PC-9 (cell line): ENCODE measurements at regions of chr17 and their contacts with region 1.

Region 1: DNA sequence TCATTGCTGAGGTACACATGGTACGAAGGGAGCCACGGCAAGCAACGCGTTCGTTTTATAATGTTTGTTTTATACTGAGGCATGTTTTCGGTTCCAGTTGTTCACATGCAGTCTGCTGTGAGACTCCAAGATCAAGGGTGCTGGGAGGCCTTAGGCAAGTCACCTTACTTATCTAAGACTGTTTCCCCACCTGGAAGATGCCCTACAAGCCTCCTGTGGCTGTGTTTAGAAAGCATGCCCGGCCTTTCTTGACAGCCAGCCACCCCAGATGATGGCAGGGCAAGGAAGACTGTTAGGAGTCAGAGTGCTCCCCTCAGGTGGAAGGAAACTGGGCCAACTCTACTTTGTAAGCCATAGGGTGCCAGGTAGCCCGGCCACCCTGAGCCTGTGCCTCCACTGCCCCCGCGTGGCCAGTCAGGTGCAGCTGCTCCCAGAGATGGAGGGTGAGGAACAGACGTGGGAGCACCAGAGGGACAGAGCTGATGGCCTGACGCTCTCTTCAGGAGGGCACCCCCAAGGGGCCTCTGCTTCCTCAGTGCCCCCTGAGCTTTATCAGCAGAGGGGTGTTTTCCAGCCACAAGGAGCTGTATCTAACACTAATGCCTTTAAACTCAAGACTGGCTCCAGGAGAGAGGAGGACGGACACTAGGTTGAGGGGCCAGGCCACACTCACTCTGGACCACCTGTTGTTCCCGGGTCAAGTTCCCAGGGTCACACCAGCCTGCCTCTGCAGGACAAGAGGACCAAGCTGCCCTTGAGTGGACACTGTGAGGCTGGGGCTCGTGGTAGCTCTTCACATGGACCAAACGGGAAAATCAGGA is 5.4 kb downstream of the NAT9 start:
- DNase-seq: peak; percentile 66 to 79
- H3K4me3 ChIP-seq: no peak overlapping the region
- H3K27ac ChIP-seq: no peak overlapping the region
- H3K4me1 ChIP-seq: peaks cover 19% of the 10 kb centered on the region
- H3K27me3 ChIP-seq: no peaks in the 10 kb centered on the region
- CTCF ChIP-seq: peak; percentile 88

Region 2: GRCh38 chr17:74566132-74566753 is 204.5 kb before region 1 on chr17:
- CTCF ChIA-PET with region 1: no interaction called
- POLR2A ChIA-PET with region 1: no interaction called
- intact Hi-C with region 1: loop called (anchors 2 kb)
- DNase-seq: peak in 1 of 2 experiments; percentile 22
- H3K4me3 ChIP-seq: no peak overlapping the region
- H3K27ac ChIP-seq: no peak overlapping the region
- H3K4me1 ChIP-seq: no peaks in the 10 kb centered on the region
- H3K27me3 ChIP-seq: peaks cover 81% of the 10 kb centered on the region
- CTCF ChIP-seq: peak; percentile 66

Region 3: GRCh38 chr17:74659898-74660297 is 110.8 kb before region 1 on chr17:
- CTCF ChIA-PET with region 1: interaction called, 6 read pairs
- POLR2A ChIA-PET with region 1: no interaction called
- intact Hi-C with region 1: loop called (anchors 1 kb)
- DNase-seq: no peak
- H3K4me3 ChIP-seq: no peak overlapping the region
- H3K27ac ChIP-seq: no peak overlapping the region
- H3K4me1 ChIP-seq: no peaks in the 10 kb centered on the region
- H3K27me3 ChIP-seq: peaks cover 84% of the 10 kb centered on the region
- CTCF ChIP-seq: no peak

Region 4: GRCh38 chr17:74722782-74723181 is 47.9 kb before region 1 on chr17:
- CTCF ChIA-PET with region 1: no interaction called
- POLR2A ChIA-PET with region 1: no interaction called
- intact Hi-C with region 1: no loop called
- DNase-seq: no peak
- H3K4me3 ChIP-seq: no peak overlapping the region
- H3K27ac ChIP-seq: no peak overlapping the region
- H3K4me1 ChIP-seq: no peaks in the 10 kb centered on the region
- H3K27me3 ChIP-seq: peaks cover 65% of the 10 kb centered on the region
- CTCF ChIP-seq: no peak

Region 5: DNA sequence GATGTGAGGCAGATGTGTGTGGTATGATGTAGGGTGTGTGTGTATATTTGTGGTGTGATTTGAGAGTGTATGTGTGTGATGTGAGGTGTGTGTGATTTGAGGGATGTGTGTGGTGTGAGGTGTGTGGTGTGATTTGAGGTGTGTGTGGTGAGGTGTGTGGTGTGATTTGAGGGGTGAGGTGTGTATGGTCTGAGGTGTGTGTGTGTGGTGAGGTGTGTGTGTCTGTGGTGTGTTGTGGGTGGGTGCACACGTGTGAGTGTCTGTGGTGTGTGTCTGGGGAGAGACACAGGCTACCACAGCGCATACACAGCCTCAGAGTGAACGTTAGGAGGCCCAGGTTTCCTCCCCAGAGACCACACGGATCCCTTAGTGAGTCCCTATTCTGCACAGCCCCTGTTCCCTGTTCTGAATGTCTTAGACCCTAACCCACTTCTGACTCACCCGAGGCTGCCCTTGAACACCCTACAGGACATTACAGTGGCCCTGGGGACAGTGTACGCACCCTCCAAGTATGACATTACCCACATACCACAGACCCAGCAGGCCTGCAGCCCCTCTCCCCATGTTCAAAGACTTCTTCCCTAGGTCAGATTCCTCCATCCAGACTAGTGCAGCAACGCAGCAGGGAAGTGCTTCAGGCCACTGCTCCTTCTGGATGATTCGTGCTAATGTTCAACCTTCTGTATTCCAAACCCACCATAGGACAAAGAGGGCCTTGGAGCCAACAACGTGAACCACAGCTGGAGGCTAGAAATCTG is 37.2 kb before region 1 on chr17:
- CTCF ChIA-PET with region 1: no interaction called
- POLR2A ChIA-PET with region 1: no interaction called
- intact Hi-C with region 1: no loop called
- DNase-seq: no peak
- H3K4me3 ChIP-seq: no peak overlapping the region
- H3K27ac ChIP-seq: no peak overlapping the region
- H3K4me1 ChIP-seq: peaks cover 6% of the 10 kb centered on the region
- H3K27me3 ChIP-seq: peaks cover 39% of the 10 kb centered on the region
- CTCF ChIP-seq: no peak

Region 6: DNA sequence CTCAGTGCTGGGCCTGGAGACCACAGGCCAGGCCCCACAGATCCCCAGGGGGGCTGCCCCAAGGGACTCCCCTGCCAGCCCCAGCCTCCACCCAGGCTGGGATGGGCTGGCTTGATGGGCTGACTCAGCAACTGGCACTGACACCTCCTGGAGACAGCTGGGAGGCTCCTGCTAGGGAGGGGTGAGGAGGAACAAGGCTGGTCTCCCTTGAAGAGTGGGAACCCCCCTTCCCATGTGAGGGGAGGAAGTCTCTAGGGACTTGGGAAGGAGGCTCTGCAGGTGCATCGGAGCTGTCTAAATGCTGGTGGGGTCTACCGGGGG is 11.9 kb before region 1 on chr17:
- CTCF ChIA-PET with region 1: interaction called, 3 read pairs
- POLR2A ChIA-PET with region 1: no interaction called
- intact Hi-C with region 1: loop called (anchors 1 kb)
- DNase-seq: peak in 1 of 2 experiments; percentile 31
- H3K4me3 ChIP-seq: no peak overlapping the region
- H3K27ac ChIP-seq: no peak overlapping the region
- H3K4me1 ChIP-seq: peaks cover 50% of the 10 kb centered on the region
- H3K27me3 ChIP-seq: no peaks in the 10 kb centered on the region
- CTCF ChIP-seq: no peak

Region 7: GRCh38 chr17:74888469-74888868 is 117.8 kb after region 1 on chr17:
- CTCF ChIA-PET with region 1: no interaction called
- POLR2A ChIA-PET with region 1: no interaction called
- intact Hi-C with region 1: no loop called
- DNase-seq: no peak
- H3K4me3 ChIP-seq: no peak overlapping the region
- H3K27ac ChIP-seq: no peak overlapping the region
- H3K4me1 ChIP-seq: no peaks in the 10 kb centered on the region
- H3K27me3 ChIP-seq: peaks cover 15% of the 10 kb centered on the region; the same call in 1 of the 2 replicates
- CTCF ChIP-seq: no peak

Region 8: DNA sequence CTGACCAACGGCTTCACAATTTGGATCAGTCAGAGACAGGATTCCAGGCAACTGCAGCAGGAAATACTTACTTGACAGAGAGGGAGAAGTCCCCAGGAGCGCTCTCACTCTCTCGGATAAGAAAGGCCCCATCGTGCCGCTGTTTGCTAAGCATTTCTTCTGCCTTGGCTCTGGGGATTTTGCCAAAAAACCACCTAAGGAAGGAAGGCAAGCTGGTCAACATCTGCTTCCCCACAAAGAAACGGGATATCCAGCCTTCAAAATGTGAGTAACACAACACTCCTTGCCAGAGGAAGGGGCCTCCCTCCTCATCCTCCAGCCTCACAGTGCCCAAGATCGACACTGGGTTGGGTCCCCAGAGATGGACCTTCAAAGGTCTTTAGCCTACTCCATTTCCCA is 555.1 kb after region 1 on chr17:
- CTCF ChIA-PET with region 1: no interaction called
- POLR2A ChIA-PET with region 1: no interaction called
- intact Hi-C with region 1: no loop called
- DNase-seq: no peak
- H3K4me3 ChIP-seq: no peak overlapping the region
- H3K27ac ChIP-seq: no peak overlapping the region
- H3K4me1 ChIP-seq: no peaks in the 10 kb centered on the region
- H3K27me3 ChIP-seq: no peaks in the 10 kb centered on the region
- CTCF ChIP-seq: no peak